Posterior cingulate gyrus (tissue), 11 donors: ENCODE measurements at regions of chr10 and their contacts with region 1.

Region 1: DNA sequence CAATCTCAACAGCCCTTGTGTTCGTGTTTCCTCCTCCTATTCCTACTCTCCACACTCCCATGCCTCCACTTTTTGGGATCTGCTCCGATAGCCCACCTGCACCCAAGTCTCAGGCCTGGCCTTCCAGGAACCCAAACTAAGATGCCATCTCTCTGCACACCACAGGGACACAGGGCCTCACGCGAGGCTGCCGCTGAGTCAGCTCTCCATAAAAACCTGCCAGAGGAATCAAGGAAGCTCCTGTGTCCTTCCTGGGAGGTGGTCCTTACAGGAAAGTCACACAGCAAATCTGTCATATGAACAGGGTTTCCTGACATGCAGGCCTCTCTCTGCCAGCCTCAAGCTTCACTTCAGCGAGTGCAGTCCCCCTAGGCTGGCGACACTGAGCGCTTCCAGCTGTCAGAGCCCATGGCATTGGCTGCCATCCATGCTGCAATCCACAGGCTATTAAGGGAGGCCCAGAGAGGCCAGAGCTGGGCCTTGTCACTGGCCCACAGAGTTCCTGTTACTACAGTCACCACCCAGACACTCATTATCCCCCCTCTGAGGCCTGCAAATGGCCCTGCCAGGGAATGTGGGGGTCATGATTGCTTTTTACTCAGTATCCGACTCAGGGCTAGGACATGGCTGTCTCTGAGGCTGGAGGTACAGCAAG is 151.4 kb downstream of the OAT start:
- DNase-seq: peak in 3 of 10 donors; percentile 21 to 62 (median 58)

Region 2: GRCh38 chr10:124351481-124352220 is 84.3 kb after region 1 on chr10:
- intact Hi-C with region 1: no loop called
- DNase-seq: no peak

Region 3: GRCh38 chr10:124364633-124365032 is 97.3 kb after region 1 on chr10:
- intact Hi-C with region 1: loop called (anchors 10 kb)
- DNase-seq: peak in 1 of 10 donors; percentile 56